Naive thymus-derived CD8-positive, alpha-beta T cell (primary cell): ENCODE measurements at regions of chr6 and their contacts with region 1.

Region 1: GRCh38 chr6:13763740-13764381 is 50.5 kb downstream of the MCUR1 start:
- DNase-seq: no peak
- ATAC-seq: no peak
- H3K4me3 Mint-ChIP-seq: no peak overlapping the region
- H3K27ac Mint-ChIP-seq: no peak overlapping the region
- H3K4me1 Mint-ChIP-seq: peaks cover 14 to 49% (median 35%) of the 10 kb centered on the region in 4 donors
- H3K27me3 Mint-ChIP-seq: peaks cover 0 to 4% (median 0%) of the 10 kb centered on the region in 5 donors

Region 2: DNA sequence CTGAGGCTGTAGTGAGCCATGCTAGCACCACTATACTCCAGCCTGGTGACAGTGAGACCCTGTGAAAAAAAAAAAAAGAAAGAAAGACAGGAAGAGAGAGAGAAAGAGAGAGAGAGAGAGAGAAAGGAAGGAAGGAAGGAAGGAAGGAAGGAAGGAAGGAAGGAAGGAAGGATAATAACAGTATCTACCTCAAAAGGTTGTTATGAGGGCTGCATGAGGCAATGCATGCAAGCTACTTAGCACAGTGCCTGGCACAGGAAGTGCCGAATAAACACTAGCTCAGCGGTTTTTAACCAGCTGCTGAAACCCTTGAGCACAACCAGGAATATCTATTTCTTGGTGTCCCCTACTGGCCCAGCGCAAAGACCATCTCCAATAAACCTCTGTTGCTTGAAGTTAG is 373.2 kb before region 1 on chr6:
- POLR2A ChIA-PET with region 1: interaction called, 10 read pairs
- DNase-seq: no peak
- ATAC-seq: no peak
- H3K4me3 Mint-ChIP-seq: peak overlapping the region in 1 of 10 donors; percentile 2
- H3K27ac Mint-ChIP-seq: peak overlapping the region in 7 of 10 donors; percentile 16 to 84 (median 60)
- H3K4me1 Mint-ChIP-seq: peaks cover 5 to 20% (median 9%) of the 10 kb centered on the region in 4 donors
- H3K27me3 Mint-ChIP-seq: no peaks in the 10 kb centered on the region

Region 3: DNA sequence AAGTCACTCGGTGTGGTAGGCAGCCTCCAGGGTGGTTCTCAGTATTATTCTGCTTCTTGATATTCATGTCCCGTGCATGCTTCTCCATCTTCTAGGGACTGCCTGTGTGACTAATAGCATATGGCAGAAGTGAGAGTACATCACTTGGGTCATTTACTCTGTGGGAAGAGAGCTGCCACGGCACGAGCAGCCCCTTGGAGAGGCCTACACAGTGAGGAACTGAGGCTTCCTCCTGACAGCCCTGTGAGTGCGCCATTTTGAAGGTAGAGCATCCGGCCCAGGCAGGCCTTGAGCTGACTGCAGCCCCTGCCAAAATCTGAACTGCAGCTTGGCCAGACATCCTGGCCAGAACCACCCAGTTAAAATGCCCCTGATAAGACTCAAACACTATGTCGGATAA is 67.8 kb after region 1 on chr6:
- POLR2A ChIA-PET with region 1: no interaction called
- DNase-seq: no peak
- ATAC-seq: no peak
- H3K4me3 Mint-ChIP-seq: no peak overlapping the region
- H3K27ac Mint-ChIP-seq: no peak overlapping the region
- H3K4me1 Mint-ChIP-seq: peaks cover 0 to 2% (median 0%) of the 10 kb centered on the region in 4 donors
- H3K27me3 Mint-ChIP-seq: peaks cover 2 to 20% (median 8%) of the 10 kb centered on the region in 5 donors